ENCODE measurements at regions of chr6 and their contacts with region 1.

Region 1: DNA sequence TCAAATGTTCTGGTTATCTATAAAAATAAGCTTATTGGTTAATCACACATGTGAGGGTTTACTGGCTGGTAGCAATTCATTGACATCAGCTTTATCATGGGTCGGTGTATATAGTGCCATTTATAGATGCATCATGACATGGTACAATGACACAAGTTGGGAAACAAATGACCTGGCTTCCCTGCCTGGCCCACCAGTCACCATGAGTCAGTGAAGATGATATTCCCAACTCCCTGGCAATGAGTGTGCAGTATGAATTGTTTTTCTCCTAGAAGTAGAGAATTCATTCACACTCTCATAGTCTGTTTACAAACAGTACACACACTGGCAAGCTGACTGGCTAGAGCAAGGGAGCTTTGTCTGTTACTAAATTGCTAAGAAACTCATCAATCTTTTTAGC is 37.2 kb upstream of the CALHM6 start:
- DNase-seq: no peak
- ATAC-seq: no peak
- H3K4me3 ChIP-seq: no peak overlapping the region
- H3K27ac ChIP-seq: no peak overlapping the region
- H3K4me1 ChIP-seq: no peaks in the 10 kb centered on the region
- H3K27me3 ChIP-seq: no peaks in the 10 kb centered on the region
- CTCF ChIP-seq: no peak

Region 2: DNA sequence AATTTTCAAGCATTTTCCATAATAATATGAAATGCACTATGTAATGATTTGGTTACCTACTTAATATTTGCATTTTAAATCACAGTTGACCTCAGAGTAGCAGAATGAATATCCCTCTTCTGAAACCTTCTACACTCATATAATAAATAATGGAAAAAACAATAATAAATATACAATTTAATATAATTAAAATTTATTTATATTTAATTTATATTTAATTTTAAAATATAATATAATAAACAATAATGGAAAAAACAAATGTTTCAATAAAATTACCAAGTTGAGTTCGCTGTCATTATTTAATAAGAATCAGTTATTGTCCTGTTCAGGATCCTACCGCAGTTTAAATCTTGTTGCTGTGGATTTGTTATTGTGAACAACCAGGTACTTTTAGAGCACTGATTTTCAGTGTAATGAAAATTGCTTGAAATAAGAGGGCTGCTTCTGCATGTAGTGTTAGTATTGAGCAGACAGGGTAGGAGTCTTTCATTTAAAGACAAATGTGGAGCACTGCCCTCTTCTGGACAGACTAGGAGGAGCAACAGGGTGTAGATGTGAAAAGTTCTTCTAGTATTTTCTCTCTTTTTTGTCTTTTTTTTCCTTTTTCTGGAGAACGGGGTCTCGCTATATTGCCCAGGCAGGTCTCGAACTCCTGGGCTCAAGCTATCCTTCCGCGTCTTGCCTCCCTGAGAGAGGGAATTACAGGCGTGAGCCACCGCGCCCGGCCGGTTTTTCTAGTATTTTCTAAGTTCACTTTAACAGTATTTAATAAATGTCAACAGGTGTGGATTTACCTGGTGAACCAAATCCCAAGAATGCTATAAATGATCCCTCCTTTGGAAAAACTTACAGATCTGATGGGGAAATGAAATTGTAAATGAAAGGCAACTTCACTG is 107.9 kb after region 1 on chr6:
- CTCF ChIA-PET with region 1: interaction called, 13 read pairs
- POLR2A ChIA-PET with region 1: no interaction called
- in situ Hi-C with region 1: no loop called
- intact Hi-C with region 1: no loop called
- DNase-seq: peak; percentile 52
- ATAC-seq: peak; percentile 90
- H3K4me3 ChIP-seq: no peak overlapping the region
- H3K27ac ChIP-seq: no peak overlapping the region
- H3K4me1 ChIP-seq: no peaks in the 10 kb centered on the region
- H3K27me3 ChIP-seq: peaks cover 41% of the 10 kb centered on the region
- CTCF ChIP-seq: peak; percentile 87

Region 3: GRCh38 chr6:116580198-116580597 is 156.2 kb after region 1 on chr6:
- CTCF ChIA-PET with region 1: no interaction called
- POLR2A ChIA-PET with region 1: no interaction called
- in situ Hi-C with region 1: no loop called
- intact Hi-C with region 1: no loop called
- DNase-seq: no peak
- ATAC-seq: no peak
- H3K4me3 ChIP-seq: no peak overlapping the region
- H3K27ac ChIP-seq: no peak overlapping the region
- H3K4me1 ChIP-seq: no peaks in the 10 kb centered on the region
- H3K27me3 ChIP-seq: no peaks in the 10 kb centered on the region
- CTCF ChIP-seq: no peak

Region 4: DNA sequence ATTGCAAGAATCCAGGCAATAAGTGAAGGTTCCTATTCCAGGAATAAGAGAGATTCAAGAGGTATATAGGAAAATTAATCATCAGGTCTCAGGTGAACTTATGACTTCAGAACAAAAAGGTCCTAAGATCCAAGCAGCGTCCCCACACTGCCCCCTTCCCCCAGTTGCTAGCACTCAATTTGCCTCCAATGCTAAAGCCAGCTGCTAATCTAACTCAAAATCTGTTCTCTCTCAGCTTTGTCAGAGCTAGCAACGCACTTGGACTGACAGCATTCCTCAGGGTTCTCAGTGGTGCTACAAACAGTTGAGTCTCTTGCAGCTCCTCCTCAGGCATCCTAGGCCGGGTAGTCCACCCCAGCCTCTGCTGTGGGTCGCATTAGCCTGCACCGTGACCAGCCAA is 601.3 kb after region 1 on chr6:
- CTCF ChIA-PET with region 1: no interaction called
- POLR2A ChIA-PET with region 1: no interaction called
- in situ Hi-C with region 1: no loop called
- intact Hi-C with region 1: no loop called
- DNase-seq: no peak
- ATAC-seq: no peak
- H3K4me3 ChIP-seq: no peak overlapping the region
- H3K27ac ChIP-seq: no peak overlapping the region
- H3K4me1 ChIP-seq: no peaks in the 10 kb centered on the region
- H3K27me3 ChIP-seq: no peaks in the 10 kb centered on the region
- CTCF ChIP-seq: no peak

Measured in Panc1 (cell line).